ENCODE measurements at regions of chr1 and their contacts with region 1.

Region 1: GRCh38 chr1:226951286-226952117 is 11.4 kb downstream of the COQ8A start:
- DNase-seq: no peak
- H3K4me3 ChIP-seq: no peak overlapping the region
- H3K27ac ChIP-seq: no peak overlapping the region
- H3K4me1 ChIP-seq: peaks cover 0 to 4% (median 0%) of the 10 kb centered on the region in 4 experiments; a peak in 3 of 7 replicates
- H3K27me3 ChIP-seq: no peaks in the 10 kb centered on the region
- CTCF ChIP-seq: no peak
- EP300 ChIP-seq: no peak
- POLR2A ChIP-seq: no peak
- RAD21 ChIP-seq: no peak

Region 2: DNA sequence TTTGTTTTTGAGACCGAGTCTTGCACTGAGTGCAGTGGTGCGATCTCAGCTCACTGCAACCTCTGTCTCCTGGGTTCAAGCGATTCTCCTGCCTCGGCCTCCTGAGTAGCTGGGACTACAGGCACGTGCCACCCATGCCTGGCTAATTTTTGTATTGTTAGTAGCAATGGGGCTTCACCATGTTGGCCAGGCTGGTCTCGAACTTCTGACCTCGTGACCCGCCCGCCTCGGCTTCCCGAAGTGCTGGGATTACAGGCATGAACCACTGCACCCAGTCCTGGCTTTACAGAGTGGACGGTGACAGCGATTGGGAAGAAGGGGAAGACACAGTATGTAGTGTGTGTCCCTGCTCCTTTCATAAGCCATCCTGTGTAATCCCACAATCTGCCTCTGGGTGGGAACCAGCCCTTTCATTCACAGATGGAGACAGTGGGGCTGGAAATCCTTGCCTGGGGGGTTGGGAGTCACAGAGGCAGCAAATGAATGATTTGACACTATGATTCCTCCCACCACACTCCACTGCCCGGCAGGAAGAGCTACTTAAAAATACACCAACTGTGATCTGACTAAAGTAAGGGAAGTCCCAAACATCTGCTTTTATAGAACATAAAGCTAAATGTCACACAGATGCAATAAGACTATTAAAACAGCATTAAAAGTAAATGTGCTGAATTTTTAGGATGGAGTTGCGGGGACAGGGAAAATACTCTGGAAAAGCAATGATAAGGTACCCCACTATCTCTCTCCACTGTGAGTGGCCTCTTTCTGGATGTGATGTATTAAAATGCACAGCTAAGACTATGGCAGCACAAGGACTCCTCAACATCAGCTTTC is 548.1 kb before region 1 on chr1:
- CTCF ChIA-PET with region 1: no interaction called
- POLR2A ChIA-PET with region 1: no interaction called
- DNase-seq: no peak
- H3K4me3 ChIP-seq: peak overlapping the region in 1 of 4 experiments; percentile 99; a peak in 2 of 8 replicates
- H3K27ac ChIP-seq: no peak overlapping the region; the same call in 1 of the 2 replicates
- H3K4me1 ChIP-seq: peaks cover 16 to 32% (median 19%) of the 10 kb centered on the region in 4 experiments
- H3K27me3 ChIP-seq: no peaks in the 10 kb centered on the region
- CTCF ChIP-seq: peak in 2 of 3 experiments; percentile 32 to 40; a peak in 2 of 4 replicates
- EP300 ChIP-seq: no peak
- POLR2A ChIP-seq: no peak
- RAD21 ChIP-seq: peak; percentile 27 to 28; a peak in 2 of 4 replicates

Region 3: GRCh38 chr1:226827968-226828513 is 123.5 kb before region 1 on chr1:
- CTCF ChIA-PET with region 1: no interaction called
- POLR2A ChIA-PET with region 1: no interaction called
- DNase-seq: peak; percentile 78 to 97
- H3K4me3 ChIP-seq: no peak overlapping the region
- H3K27ac ChIP-seq: no peak overlapping the region
- H3K4me1 ChIP-seq: no peaks in the 10 kb centered on the region; a peak in 2 of 7 replicates
- H3K27me3 ChIP-seq: no peaks in the 10 kb centered on the region
- CTCF ChIP-seq: peak; percentile 91 to 96 (median 94)
- EP300 ChIP-seq: peak in 1 of 2 experiments; percentile 62; a peak in 1 of 3 replicates
- POLR2A ChIP-seq: no peak
- RAD21 ChIP-seq: peak; percentile 96 to 100

Region 4: GRCh38 chr1:226912587-226913176 is 38.8 kb before region 1 on chr1:
- CTCF ChIA-PET with region 1: interaction called, 10 read pairs
- POLR2A ChIA-PET with region 1: interaction called, 3 read pairs
- DNase-seq: peak; percentile 57 to 76
- H3K4me3 ChIP-seq: no peak overlapping the region
- H3K27ac ChIP-seq: no peak overlapping the region
- H3K4me1 ChIP-seq: no peaks in the 10 kb centered on the region
- H3K27me3 ChIP-seq: no peaks in the 10 kb centered on the region
- CTCF ChIP-seq: peak; percentile 80 to 88 (median 82)
- EP300 ChIP-seq: no peak
- POLR2A ChIP-seq: no peak
- RAD21 ChIP-seq: peak; percentile 96 to 97

Region 5: DNA sequence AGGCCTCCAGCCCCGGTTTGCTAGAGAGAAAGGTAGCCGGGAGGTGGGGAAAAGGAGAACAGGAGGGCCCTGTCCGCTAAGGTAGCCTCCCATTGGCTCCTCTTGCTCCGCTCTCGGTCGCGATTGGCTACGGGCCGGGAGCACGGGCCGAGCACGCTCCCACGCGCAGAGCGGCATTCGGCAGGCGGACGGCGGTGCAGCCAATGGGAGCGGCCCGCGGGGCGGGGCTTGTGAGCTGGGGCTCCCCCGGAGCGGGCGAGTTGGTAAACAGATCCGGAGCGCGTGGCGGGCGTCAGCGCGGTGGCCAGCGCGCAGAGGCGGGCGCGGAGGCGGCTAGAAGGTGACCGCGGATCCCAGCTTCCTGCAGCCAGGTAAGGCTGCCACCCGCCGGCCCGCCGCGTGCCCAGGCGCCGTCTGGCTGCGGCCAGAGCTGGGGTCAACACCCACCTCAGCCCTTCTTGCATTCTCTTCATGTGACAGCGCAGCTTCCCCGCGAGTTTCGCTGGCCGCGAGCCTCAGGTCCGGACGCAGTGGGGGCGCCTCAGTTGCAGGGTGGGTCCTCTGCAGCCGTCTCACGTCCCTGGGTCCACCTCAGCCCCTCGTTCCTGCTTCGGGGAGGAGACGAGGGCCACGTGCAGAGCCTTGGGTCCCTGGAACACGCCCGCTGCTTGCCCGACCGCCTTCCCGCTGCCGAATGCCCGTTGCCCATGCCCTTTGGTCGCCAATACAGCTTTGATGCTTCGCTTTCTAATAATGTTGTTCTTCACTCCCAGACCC is 11.3 kb before region 1 on chr1 and contains the start of gene COQ8A:
- CTCF ChIA-PET with region 1: interaction called, 4 read pairs
- POLR2A ChIA-PET with region 1: interaction called, 18 read pairs
- DNase-seq: peak; percentile 98
- H3K4me3 ChIP-seq: peak within 1 kb of the TSS; percentile 53 to 75 (median 68)
- H3K27ac ChIP-seq: peak within 1 kb of the TSS; percentile 93
- H3K4me1 ChIP-seq: peaks cover 2 to 9% (median 5%) of the 10 kb centered on the region in 4 experiments
- H3K27me3 ChIP-seq: peaks cover 0 to 2% (median 0%) of the 10 kb centered on the region in 4 experiments; a peak in 3 of 7 replicates
- CTCF ChIP-seq: no peak
- EP300 ChIP-seq: no peak
- POLR2A ChIP-seq: no peak; a peak in 1 of 3 replicates
- RAD21 ChIP-seq: no peak
- total RNA-seq, gene COQ8A: 38.9 and 39.0 TPM in 2 replicates

Measured in H1 (cell line).